Activated B cell treated with CpG ODN at 0.5 μM for 24 hours (primary cell): ENCODE measurements at regions of chr3 and their contacts with region 1.

Region 1: GRCh38 chr3:20154931-20155330 is 31.1 kb downstream of the SGO1 start:
- DNase-seq: no peak
- ATAC-seq: no peak
- H3K4me3 Mint-ChIP-seq: no peak overlapping the region
- H3K27ac Mint-ChIP-seq: no peak overlapping the region
- H3K4me1 Mint-ChIP-seq: peaks cover 5% of the 10 kb centered on the region
- H3K27me3 Mint-ChIP-seq: no peaks in the 10 kb centered on the region
- CTCF ChIP-seq: no peak

Region 2: DNA sequence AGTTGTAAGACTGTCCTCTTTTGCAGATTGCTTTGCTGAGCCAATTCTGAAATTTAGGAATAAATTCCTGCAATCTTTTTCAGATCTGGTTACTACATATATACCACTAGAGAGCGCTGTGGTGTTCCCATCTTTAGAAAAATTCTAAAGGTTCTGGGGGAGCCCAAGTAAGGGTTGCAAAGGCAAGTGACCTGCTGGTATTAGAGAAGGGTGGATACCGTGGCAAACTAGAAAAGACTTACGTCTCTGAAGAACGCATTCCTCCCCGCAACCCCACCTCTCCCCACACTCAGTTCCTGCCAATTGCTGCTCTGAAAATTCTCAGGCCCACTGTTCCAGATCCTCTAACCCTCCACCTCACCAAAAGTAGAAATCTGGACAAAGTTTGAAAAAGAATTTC is 269.5 kb before region 1 on chr3:
- CTCF ChIA-PET with region 1: no interaction called
- POLR2A ChIA-PET with region 1: no interaction called
- intact Hi-C with region 1: loop called (anchors 5 kb)
- DNase-seq: no peak
- ATAC-seq: no peak
- H3K4me3 Mint-ChIP-seq: no peak overlapping the region
- H3K27ac Mint-ChIP-seq: no peak overlapping the region
- H3K4me1 Mint-ChIP-seq: no peaks in the 10 kb centered on the region
- H3K27me3 Mint-ChIP-seq: no peaks in the 10 kb centered on the region
- CTCF ChIP-seq: no peak

Region 3: DNA sequence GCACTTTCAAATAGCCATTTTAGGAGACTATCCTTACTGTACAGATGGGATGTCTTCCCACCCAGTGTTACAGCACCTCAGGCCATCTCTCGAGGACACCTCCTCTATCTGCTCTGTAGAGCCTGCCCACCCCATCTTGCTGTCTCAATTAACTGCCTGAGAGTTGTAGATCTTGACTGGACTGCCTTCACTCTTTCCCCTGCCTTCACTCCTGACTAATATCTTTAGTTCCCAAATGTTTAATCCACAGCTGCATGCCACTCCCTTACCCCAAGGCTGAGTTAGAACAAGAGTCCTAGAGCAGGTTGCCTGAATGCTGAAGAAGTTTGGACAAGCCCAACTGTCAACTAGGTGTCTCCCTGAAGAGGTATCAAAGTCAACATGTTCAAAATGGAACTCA is 141.5 kb before region 1 on chr3:
- CTCF ChIA-PET with region 1: no interaction called
- POLR2A ChIA-PET with region 1: no interaction called
- intact Hi-C with region 1: no loop called
- DNase-seq: no peak
- ATAC-seq: no peak
- H3K4me3 Mint-ChIP-seq: no peak overlapping the region
- H3K27ac Mint-ChIP-seq: no peak overlapping the region
- H3K4me1 Mint-ChIP-seq: no peaks in the 10 kb centered on the region
- H3K27me3 Mint-ChIP-seq: no peaks in the 10 kb centered on the region
- CTCF ChIP-seq: no peak

Region 4: DNA sequence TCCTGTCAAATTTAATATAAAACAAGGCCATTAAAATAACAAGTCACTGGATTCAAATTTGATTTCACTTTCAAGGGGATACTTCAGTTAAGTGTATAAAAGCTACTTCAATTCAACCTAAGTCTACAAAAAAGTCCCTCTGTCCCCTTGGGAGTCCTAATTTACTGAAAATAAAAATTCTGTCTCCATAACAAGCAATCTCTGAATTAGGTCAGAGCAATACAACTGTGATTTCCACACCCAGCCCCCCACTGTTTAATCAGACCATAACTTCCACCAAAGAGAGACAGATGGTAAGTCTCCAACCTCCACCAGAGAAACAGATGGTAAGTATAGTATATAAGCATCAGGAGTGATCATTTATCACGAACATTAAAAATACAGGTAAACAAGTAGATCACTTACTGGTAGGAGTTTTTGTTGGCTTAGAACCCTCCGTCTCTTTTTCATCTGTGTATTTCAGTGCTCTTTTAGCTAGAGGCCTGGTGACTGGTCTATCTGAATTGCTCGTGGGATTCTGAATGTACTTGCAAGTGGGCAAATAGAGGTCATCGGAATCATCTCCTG is 19.0 kb after region 1 on chr3:
- CTCF ChIA-PET with region 1: no interaction called
- POLR2A ChIA-PET with region 1: no interaction called
- intact Hi-C with region 1: loop called (anchors 2 kb)
- DNase-seq: no peak
- ATAC-seq: peak; percentile 50
- H3K4me3 Mint-ChIP-seq: no peak overlapping the region
- H3K27ac Mint-ChIP-seq: no peak overlapping the region
- H3K4me1 Mint-ChIP-seq: peaks cover 13% of the 10 kb centered on the region
- H3K27me3 Mint-ChIP-seq: no peaks in the 10 kb centered on the region
- CTCF ChIP-seq: no peak

Region 5: GRCh38 chr3:20225769-20226168 is 70.8 kb after region 1 on chr3:
- CTCF ChIA-PET with region 1: no interaction called
- POLR2A ChIA-PET with region 1: no interaction called
- intact Hi-C with region 1: no loop called
- DNase-seq: no peak
- ATAC-seq: no peak
- H3K4me3 Mint-ChIP-seq: no peak overlapping the region
- H3K27ac Mint-ChIP-seq: no peak overlapping the region
- H3K4me1 Mint-ChIP-seq: no peaks in the 10 kb centered on the region
- H3K27me3 Mint-ChIP-seq: no peaks in the 10 kb centered on the region
- CTCF ChIP-seq: no peak